MCF 10A (cell line): ENCODE measurements at regions of chr19 and their contacts with region 1.

Region 1: GRCh38 chr19:13430790-13431582 is 75.3 kb downstream of the CACNA1A start:
- DNase-seq: peak; percentile 72
- H3K4me3 Mint-ChIP-seq: no peak overlapping the region
- H3K27ac Mint-ChIP-seq: no peak overlapping the region
- H3K4me1 Mint-ChIP-seq: no peaks in the 10 kb centered on the region
- H3K27me3 Mint-ChIP-seq: peaks cover 11% of the 10 kb centered on the region
- CTCF ChIP-seq: peak; percentile 82

Region 2: DNA sequence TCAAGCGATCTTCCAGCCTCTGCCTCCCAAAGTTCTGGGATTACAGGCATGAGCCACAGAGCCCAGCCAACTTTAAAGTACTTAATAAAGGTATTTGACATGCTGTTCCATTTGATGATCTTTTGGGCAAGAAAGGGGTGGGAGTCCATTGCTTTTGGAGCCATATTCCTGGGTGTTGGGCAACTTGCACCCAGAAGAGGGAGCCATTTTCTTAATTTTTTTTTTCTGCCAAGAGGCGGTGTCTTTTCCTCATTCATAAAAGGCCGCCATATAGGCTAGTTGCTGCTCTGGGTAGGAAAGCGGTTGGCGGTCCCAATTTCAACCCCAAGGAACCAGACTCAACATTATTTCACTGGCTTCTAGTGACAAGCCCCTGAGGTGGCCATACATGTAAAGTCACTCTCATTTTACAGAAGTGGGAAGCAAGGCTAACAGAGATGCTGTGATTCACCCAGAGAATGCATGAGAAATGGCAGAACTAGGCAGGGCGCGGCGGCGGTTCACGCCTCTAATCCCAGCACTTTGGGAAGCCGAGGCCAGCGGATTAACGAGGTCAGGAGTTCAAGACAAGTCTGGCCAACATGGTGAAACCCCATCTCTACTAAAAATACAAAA is 64.3 kb before region 1 on chr19:
- CTCF ChIA-PET with region 1: interaction called, 6 read pairs
- POLR2A ChIA-PET with region 1: no interaction called
- intact Hi-C with region 1: loop called (anchors 1 kb)
- DNase-seq: peak; percentile 61
- H3K4me3 Mint-ChIP-seq: no peak overlapping the region
- H3K27ac Mint-ChIP-seq: no peak overlapping the region
- H3K4me1 Mint-ChIP-seq: no peaks in the 10 kb centered on the region
- H3K27me3 Mint-ChIP-seq: no peaks in the 10 kb centered on the region
- CTCF ChIP-seq: peak; percentile 63

Region 3: DNA sequence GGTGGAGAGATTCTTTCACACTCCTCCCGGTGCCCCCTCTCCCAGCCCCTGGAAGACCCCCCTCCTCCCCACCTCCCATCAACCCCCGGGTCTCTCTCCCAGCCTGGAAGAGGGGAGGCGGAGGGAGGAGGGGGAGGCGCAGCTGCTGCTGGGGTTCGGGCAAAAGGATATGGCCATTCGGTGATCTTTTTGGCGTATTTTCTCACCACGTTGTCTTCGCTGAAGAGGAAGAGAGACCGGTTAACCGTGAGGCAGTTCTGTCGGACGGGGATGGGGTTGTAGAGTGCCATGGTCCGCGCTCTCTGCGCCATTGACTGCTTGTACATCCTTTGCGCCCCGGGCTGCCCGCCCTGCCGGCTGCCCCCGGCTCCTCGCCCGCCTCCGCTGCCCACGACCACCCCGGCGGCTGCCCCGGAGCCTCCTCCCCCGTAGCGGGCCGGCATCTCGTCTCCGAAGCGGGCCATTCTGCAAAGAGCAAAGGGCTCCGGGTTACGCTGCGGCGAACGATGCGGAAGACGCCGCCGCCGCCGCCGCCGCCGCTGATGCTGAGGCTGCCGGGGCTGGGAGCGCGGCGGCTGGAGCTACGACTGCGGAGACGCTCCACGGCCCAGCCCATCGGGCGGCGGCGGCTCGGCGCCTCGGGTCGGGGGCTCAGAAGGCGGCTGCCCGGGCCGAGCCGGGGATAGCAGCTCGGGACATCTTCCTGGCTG is 74.9 kb after region 1 on chr19:
- CTCF ChIA-PET with region 1: no interaction called
- POLR2A ChIA-PET with region 1: no interaction called
- intact Hi-C with region 1: no loop called
- DNase-seq: no peak
- H3K4me3 Mint-ChIP-seq: no peak overlapping the region
- H3K27ac Mint-ChIP-seq: no peak overlapping the region
- H3K4me1 Mint-ChIP-seq: no peaks in the 10 kb centered on the region
- H3K27me3 Mint-ChIP-seq: peaks cover 87% of the 10 kb centered on the region
- CTCF ChIP-seq: no peak

Region 4: DNA sequence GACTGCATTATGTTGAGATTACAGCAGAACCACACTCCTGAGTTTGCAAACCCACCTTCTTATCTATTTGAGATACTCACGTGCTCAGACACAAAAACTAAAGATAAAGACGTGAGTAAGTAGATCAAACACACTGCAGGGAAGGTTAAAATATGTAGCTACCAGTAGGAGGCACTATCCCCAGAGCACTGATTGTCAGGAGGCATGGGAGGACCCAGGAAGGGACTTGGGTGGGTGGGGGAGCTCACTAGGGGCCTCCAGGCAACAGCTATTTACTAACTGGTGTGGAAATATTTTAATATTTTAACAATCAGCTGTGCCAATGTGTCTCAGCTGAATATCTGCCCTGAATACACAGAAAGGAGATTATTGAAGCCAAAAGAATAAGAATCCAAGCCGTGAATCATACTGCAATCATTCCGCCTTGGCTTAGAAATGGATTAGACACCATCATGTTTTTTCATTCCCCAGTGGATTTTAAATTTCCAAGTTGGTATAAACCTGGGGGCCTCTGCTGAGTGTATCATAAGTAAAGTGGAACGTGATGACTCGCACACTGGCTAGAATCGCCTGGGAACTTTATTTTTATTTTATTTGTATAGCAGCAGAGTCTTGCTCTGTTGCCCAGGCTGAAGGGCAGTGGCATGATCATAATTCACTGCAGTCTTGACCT is 148.5 kb after region 1 on chr19:
- CTCF ChIA-PET with region 1: no interaction called
- POLR2A ChIA-PET with region 1: no interaction called
- intact Hi-C with region 1: no loop called
- DNase-seq: no peak
- H3K4me3 Mint-ChIP-seq: no peak overlapping the region
- H3K27ac Mint-ChIP-seq: no peak overlapping the region
- H3K4me1 Mint-ChIP-seq: no peaks in the 10 kb centered on the region
- H3K27me3 Mint-ChIP-seq: peaks cover 5% of the 10 kb centered on the region
- CTCF ChIP-seq: no peak

Region 5: GRCh38 chr19:14347999-14348889 is 917.3 kb after region 1 on chr19:
- CTCF ChIA-PET with region 1: no interaction called
- POLR2A ChIA-PET with region 1: no interaction called
- intact Hi-C with region 1: no loop called
- DNase-seq: peak; percentile 66
- H3K4me3 Mint-ChIP-seq: peak overlapping the region; percentile 43
- H3K27ac Mint-ChIP-seq: no peak overlapping the region
- H3K4me1 Mint-ChIP-seq: peaks cover under 1% of the 10 kb centered on the region
- H3K27me3 Mint-ChIP-seq: no peaks in the 10 kb centered on the region
- CTCF ChIP-seq: peak; percentile 97